ENCODE measurements at regions of chr18 and their contacts with region 1.

Region 1: GRCh38 chr18:63890950-63891304 is 3.4 kb downstream of the SERPINB2 start:
- DNase-seq: no peak
- H3K4me3 Mint-ChIP-seq: no peak overlapping the region
- H3K27ac Mint-ChIP-seq: no peak overlapping the region
- H3K4me1 Mint-ChIP-seq: peaks cover 6% of the 10 kb centered on the region
- H3K27me3 Mint-ChIP-seq: peaks cover 14% of the 10 kb centered on the region

Region 2: GRCh38 chr18:63917817-63918216 is 26.9 kb after region 1 on chr18:
- CTCF ChIA-PET with region 1: no interaction called
- POLR2A ChIA-PET with region 1: no interaction called
- intact Hi-C with region 1: no loop called
- DNase-seq: no peak
- H3K4me3 Mint-ChIP-seq: no peak overlapping the region
- H3K27ac Mint-ChIP-seq: no peak overlapping the region
- H3K4me1 Mint-ChIP-seq: no peaks in the 10 kb centered on the region
- H3K27me3 Mint-ChIP-seq: peaks cover 23% of the 10 kb centered on the region

Region 3: GRCh38 chr18:63969960-63970802 is 79.3 kb after region 1 on chr18 and contains the start of gene SERPINB8:
- CTCF ChIA-PET with region 1: no interaction called
- POLR2A ChIA-PET with region 1: no interaction called
- intact Hi-C with region 1: loop called (anchors 2 kb)
- DNase-seq: peak; percentile 91
- H3K4me3 Mint-ChIP-seq: peak within 1 kb of the TSS; percentile 88
- H3K27ac Mint-ChIP-seq: peak within 1 kb of the TSS; percentile 95
- H3K4me1 Mint-ChIP-seq: peaks cover 41% of the 10 kb centered on the region
- H3K27me3 Mint-ChIP-seq: no peaks in the 10 kb centered on the region
- total RNA-seq, gene SERPINB8: 14.6 to 14.9 TPM

Measured in activated CD4-positive, alpha-beta memory T cell treated with anti-CD3 and anti-CD28 coated beads for 36 hours (primary cell).